ENCODE measurements at regions of chr6 and their contacts with region 1.

Region 1: GRCh38 chr6:31462964-31463870 is 34.7 kb upstream of the MICB start:
- DNase-seq: peak; percentile 91
- ATAC-seq: peak; percentile 95
- H3K4me3 Mint-ChIP-seq: peak overlapping the region; percentile 100
- H3K27ac Mint-ChIP-seq: peak overlapping the region; percentile 97
- H3K4me1 Mint-ChIP-seq: peaks cover 53% of the 10 kb centered on the region
- H3K27me3 Mint-ChIP-seq: peaks cover 2% of the 10 kb centered on the region

Region 2: DNA sequence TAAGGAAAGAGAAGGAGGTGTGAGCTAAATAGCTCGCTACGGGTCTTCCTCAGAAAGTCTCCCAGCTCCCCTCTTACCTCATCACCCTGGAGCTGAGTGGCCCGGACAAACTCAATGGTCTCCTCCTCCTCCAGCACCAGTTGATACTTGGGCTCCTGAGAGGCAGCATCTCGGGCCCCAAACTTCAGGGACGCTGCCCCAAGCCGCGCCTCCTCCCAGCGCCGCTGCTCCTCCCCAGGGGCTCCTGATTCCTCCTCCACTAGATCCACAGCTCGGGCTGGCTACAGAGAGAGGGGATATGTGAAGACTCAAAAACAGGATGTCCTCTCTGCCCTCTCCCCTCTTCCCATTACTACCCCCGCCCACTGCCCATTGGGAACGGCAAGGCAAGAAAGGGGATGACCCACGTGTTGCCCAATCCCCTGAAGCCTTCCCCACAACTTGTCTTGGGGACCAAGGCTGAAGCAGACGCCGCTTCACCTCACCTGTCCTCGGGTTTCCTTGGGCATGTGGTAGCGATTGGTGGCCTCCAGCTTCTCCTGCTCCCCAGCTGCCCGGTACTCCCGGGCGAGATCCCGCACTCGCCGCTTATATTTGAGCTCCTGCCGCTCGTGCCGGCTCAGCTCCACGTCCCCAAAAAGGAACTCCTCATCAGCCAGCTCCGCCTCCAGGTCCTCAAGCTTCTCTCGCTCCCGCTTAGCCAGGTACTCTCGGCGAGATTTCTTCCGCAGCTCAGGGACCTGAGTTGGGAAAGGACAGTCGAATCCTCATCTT is 798.0 kb before region 1 on chr6:
- CTCF ChIA-PET with region 1: no interaction called
- POLR2A ChIA-PET with region 1: no interaction called
- intact Hi-C with region 1: no loop called
- DNase-seq: no peak
- ATAC-seq: no peak
- H3K4me3 Mint-ChIP-seq: no peak overlapping the region
- H3K27ac Mint-ChIP-seq: no peak overlapping the region
- H3K4me1 Mint-ChIP-seq: peaks cover 14% of the 10 kb centered on the region
- H3K27me3 Mint-ChIP-seq: no peaks in the 10 kb centered on the region

Region 3: GRCh38 chr6:31493875-31494694 is 30.9 kb after region 1 on chr6:
- CTCF ChIA-PET with region 1: interaction called, 5 read pairs
- POLR2A ChIA-PET with region 1: interaction called, 5 read pairs
- intact Hi-C with region 1: loop called in 1 of 2 experiments (anchors 1 kb)
- DNase-seq: peak; percentile 91
- ATAC-seq: peak; percentile 58
- H3K4me3 Mint-ChIP-seq: peak overlapping the region; percentile 79
- H3K27ac Mint-ChIP-seq: peak overlapping the region; percentile 90
- H3K4me1 Mint-ChIP-seq: peaks cover 43% of the 10 kb centered on the region
- H3K27me3 Mint-ChIP-seq: no peaks in the 10 kb centered on the region